ENCODE measurements at regions of chr7 and their contacts with region 1.

Region 1: GRCh38 chr7:16420649-16421332 is 547 bp downstream of the CRPPA start:
- DNase-seq: peak; percentile 92
- ATAC-seq: peak; percentile 95
- H3K4me3 Mint-ChIP-seq: peak overlapping the region; percentile 91
- H3K27ac Mint-ChIP-seq: peak overlapping the region; percentile 98
- H3K4me1 Mint-ChIP-seq: peaks cover 24% of the 10 kb centered on the region
- H3K27me3 Mint-ChIP-seq: no peaks in the 10 kb centered on the region

Region 2: GRCh38 chr7:16431646-16432424 is 11.0 kb after region 1 on chr7:
- CTCF ChIA-PET with region 1: interaction called, 27 read pairs
- POLR2A ChIA-PET with region 1: interaction called, 7 read pairs
- DNase-seq: peak; percentile 52
- ATAC-seq: peak; percentile 73
- H3K4me3 Mint-ChIP-seq: no peak overlapping the region
- H3K27ac Mint-ChIP-seq: no peak overlapping the region
- H3K4me1 Mint-ChIP-seq: no peaks in the 10 kb centered on the region
- H3K27me3 Mint-ChIP-seq: no peaks in the 10 kb centered on the region

Region 3: GRCh38 chr7:16645593-16646471 is 225.0 kb after region 1 on chr7 and contains the starts of genes ANKMY2 and BZW2:
- CTCF ChIA-PET with region 1: interaction called, 3 read pairs
- POLR2A ChIA-PET with region 1: interaction called, 19 read pairs
- DNase-seq: peak; percentile 95
- ATAC-seq: peak; percentile 91
- H3K4me3 Mint-ChIP-seq: peak within 1 kb of the TSS; percentile 98
- H3K27ac Mint-ChIP-seq: peak within 1 kb of the TSS; percentile 98
- H3K4me1 Mint-ChIP-seq: peaks cover 56% of the 10 kb centered on the region
- H3K27me3 Mint-ChIP-seq: no peaks in the 10 kb centered on the region
- total RNA-seq, gene ANKMY2: 14.3 to 14.5 TPM
- total RNA-seq, gene BZW2: 59.7 to 62.3 TPM

Measured in activated CD8-positive, alpha-beta T cell treated with anti-CD3 and anti-CD28 coated beads, Interleukin-2, amount 10 ng/mL, durations not matched to agents 7 days and 5 days (primary cell).